Calu3 (cell line): ENCODE measurements at regions of chrX and their contacts with region 1.

Region 1: GRCh38 chrX:14528629-14529289 is 577 bp upstream of the GLRA2 start:
- DNase-seq: peak; percentile 81
- H3K4me3 Mint-ChIP-seq: peak overlapping the region; percentile 65
- H3K27ac Mint-ChIP-seq: no peak overlapping the region
- H3K4me1 Mint-ChIP-seq: no peaks in the 10 kb centered on the region
- H3K27me3 Mint-ChIP-seq: no peaks in the 10 kb centered on the region
- CTCF ChIP-seq: peak; percentile 39

Region 2: GRCh38 chrX:14039344-14039743 is 489.4 kb before region 1 on chrX:
- CTCF ChIA-PET with region 1: no interaction called
- intact Hi-C with region 1: loop called (anchors 2 kb)
- DNase-seq: peak; percentile 56
- H3K4me3 Mint-ChIP-seq: no peak overlapping the region
- H3K27ac Mint-ChIP-seq: no peak overlapping the region
- H3K4me1 Mint-ChIP-seq: no peaks in the 10 kb centered on the region
- H3K27me3 Mint-ChIP-seq: no peaks in the 10 kb centered on the region
- CTCF ChIP-seq: peak; percentile 34

Region 3: DNA sequence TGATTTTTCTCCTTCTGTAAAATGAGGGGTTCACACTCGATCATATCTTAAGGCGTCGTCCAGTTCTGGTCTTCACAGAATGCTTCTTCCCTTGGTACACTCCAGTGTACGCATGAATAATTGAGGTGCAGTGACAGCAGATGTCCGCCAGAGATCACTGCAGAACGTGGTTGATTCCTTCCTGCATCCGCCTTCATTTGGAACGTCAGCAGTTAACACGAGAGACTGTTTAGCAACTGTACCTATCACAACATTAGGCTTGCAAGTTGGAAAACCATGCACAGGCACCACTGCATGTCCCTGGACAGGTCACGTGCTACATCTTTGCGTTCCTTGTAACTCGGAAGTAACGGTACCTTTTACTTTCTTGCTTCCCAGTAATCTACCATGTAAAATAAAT is 433.1 kb before region 1 on chrX:
- CTCF ChIA-PET with region 1: interaction called, 5 read pairs
- intact Hi-C with region 1: loop called (anchors 1 kb)
- DNase-seq: peak; percentile 33
- H3K4me3 Mint-ChIP-seq: no peak overlapping the region
- H3K27ac Mint-ChIP-seq: no peak overlapping the region
- H3K4me1 Mint-ChIP-seq: no peaks in the 10 kb centered on the region
- H3K27me3 Mint-ChIP-seq: peaks cover 12% of the 10 kb centered on the region
- CTCF ChIP-seq: peak; percentile 53

Region 4: GRCh38 chrX:14386981-14387380 is 141.8 kb before region 1 on chrX:
- CTCF ChIA-PET with region 1: no interaction called
- intact Hi-C with region 1: loop called (anchors 10 kb)
- DNase-seq: no peak
- H3K4me3 Mint-ChIP-seq: no peak overlapping the region
- H3K27ac Mint-ChIP-seq: no peak overlapping the region
- H3K4me1 Mint-ChIP-seq: no peaks in the 10 kb centered on the region
- H3K27me3 Mint-ChIP-seq: no peaks in the 10 kb centered on the region
- CTCF ChIP-seq: no peak